ENCODE measurements at regions of chr16 and their contacts with region 1.

Region 1: GRCh38 chr16:47574091-47575054 is 113.2 kb downstream of the PHKB start:
- DNase-seq: peak; percentile 72
- H3K4me3 Mint-ChIP-seq: peak overlapping the region; percentile 53
- H3K27ac Mint-ChIP-seq: peak overlapping the region; percentile 38
- H3K4me1 Mint-ChIP-seq: peaks cover 55% of the 10 kb centered on the region
- H3K27me3 Mint-ChIP-seq: no peaks in the 10 kb centered on the region

Region 2: GRCh38 chr16:47037746-47038458 is 536.5 kb before region 1 on chr16:
- intact Hi-C with region 1: loop called (anchors 5 kb)
- DNase-seq: peak; percentile 97
- H3K4me3 Mint-ChIP-seq: peak overlapping the region; percentile 82
- H3K27ac Mint-ChIP-seq: no peak overlapping the region
- H3K4me1 Mint-ChIP-seq: peaks cover 4% of the 10 kb centered on the region
- H3K27me3 Mint-ChIP-seq: peaks cover 14% of the 10 kb centered on the region

Region 3: GRCh38 chr16:47197536-47198179 is 376.7 kb before region 1 on chr16:
- intact Hi-C with region 1: no loop called
- DNase-seq: no peak
- H3K4me3 Mint-ChIP-seq: no peak overlapping the region
- H3K27ac Mint-ChIP-seq: no peak overlapping the region
- H3K4me1 Mint-ChIP-seq: no peaks in the 10 kb centered on the region
- H3K27me3 Mint-ChIP-seq: no peaks in the 10 kb centered on the region

Region 4: DNA sequence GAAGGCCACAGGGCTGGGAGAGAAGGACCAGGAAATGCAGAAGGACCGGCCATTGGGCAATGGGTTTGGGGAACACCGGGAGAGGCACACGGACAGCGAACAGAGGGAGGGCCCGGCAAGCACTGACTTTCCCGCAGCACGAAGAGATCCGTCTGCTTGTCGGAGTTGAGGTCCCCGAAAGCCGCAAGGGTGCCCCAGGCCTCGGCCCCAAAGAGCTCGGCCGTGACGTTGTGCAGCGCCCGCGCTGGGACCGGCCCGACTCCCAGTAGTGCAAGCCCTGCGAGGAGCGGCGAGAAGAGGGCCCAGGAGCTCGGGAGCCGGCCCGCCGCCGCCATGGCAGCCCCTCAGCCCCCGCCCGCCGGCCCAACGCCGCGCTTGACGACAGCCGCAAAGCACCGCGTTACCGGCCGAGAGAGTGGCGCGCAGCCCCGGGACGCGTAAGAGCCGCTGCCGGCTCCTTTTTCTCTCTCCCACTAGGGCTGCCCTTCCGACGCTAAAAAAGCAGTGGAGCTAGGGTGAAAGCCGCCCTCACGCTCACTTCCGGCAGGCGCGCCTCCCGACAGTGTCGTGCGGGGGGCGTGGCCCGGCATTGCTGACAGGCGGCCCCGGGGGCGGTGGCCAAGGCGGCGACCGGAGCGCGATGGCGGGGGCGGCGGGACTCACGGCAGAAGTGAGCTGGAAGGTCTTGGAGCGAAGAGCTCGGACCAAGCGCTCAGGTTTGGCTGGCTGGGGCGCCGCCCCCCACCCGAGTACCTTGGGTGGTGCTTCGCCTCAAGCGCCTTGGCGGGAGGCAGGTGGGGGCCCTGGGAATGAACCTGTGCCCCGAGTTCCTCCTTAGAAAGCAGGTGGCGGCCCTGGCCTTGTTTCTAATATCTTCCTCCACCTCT is 113.4 kb before region 1 on chr16 and contains the starts of genes ITFG1 and PHKB:
- intact Hi-C with region 1: loop called (anchors 1 kb)
- DNase-seq: peak; percentile 99
- H3K4me3 Mint-ChIP-seq: peak within 1 kb of the TSS; percentile 94
- H3K27ac Mint-ChIP-seq: peak within 1 kb of the TSS; percentile 97
- H3K4me1 Mint-ChIP-seq: peaks cover 36% of the 10 kb centered on the region
- H3K27me3 Mint-ChIP-seq: no peaks in the 10 kb centered on the region
- total RNA-seq, gene ITFG1: 26.1 and 28.5 TPM in 2 replicates
- total RNA-seq, gene PHKB: 23.7 and 27.9 TPM in 2 replicates

Region 5: GRCh38 chr16:47612711-47613110 is 38.3 kb after region 1 on chr16:
- intact Hi-C with region 1: no loop called
- DNase-seq: peak; percentile 43
- H3K4me3 Mint-ChIP-seq: no peak overlapping the region
- H3K27ac Mint-ChIP-seq: no peak overlapping the region
- H3K4me1 Mint-ChIP-seq: no peaks in the 10 kb centered on the region
- H3K27me3 Mint-ChIP-seq: no peaks in the 10 kb centered on the region

Region 6: GRCh38 chr16:47732523-47733111 is 158.2 kb after region 1 on chr16:
- intact Hi-C with region 1: loop called (anchors 1 kb)
- DNase-seq: peak; percentile 74
- H3K4me3 Mint-ChIP-seq: peak overlapping the region; percentile 4
- H3K27ac Mint-ChIP-seq: peak overlapping the region; percentile 88
- H3K4me1 Mint-ChIP-seq: peaks cover 23% of the 10 kb centered on the region
- H3K27me3 Mint-ChIP-seq: peaks cover 2% of the 10 kb centered on the region

Measured in activated CD4-positive, alpha-beta T cell treated with anti-CD3 and anti-CD28 coated beads, Interleukin-2, amount 10 ng/mL, durations not matched to agents 24 days and 14 days (primary cell).